Activated naive CD4-positive, alpha-beta T cell treated with anti-CD3 and anti-CD28 coated beads for 36 hours (primary cell): ENCODE measurements at regions of chr7 and their contacts with region 1.

Region 1: GRCh38 chr7:130084037-130084875 is 13.9 kb downstream of the KLHDC10 start:
- DNase-seq: no peak
- H3K4me3 Mint-ChIP-seq: no peak overlapping the region
- H3K27ac Mint-ChIP-seq: no peak overlapping the region
- H3K4me1 Mint-ChIP-seq: peaks cover 21% of the 10 kb centered on the region
- H3K27me3 Mint-ChIP-seq: no peaks in the 10 kb centered on the region

Region 2: GRCh38 chr7:130124711-130125110 is 40.5 kb after region 1 on chr7:
- CTCF ChIA-PET with region 1: interaction called, 11 read pairs
- intact Hi-C with region 1: no loop called
- DNase-seq: no peak
- H3K4me3 Mint-ChIP-seq: no peak overlapping the region
- H3K27ac Mint-ChIP-seq: no peak overlapping the region
- H3K4me1 Mint-ChIP-seq: no peaks in the 10 kb centered on the region
- H3K27me3 Mint-ChIP-seq: no peaks in the 10 kb centered on the region

Region 3: DNA sequence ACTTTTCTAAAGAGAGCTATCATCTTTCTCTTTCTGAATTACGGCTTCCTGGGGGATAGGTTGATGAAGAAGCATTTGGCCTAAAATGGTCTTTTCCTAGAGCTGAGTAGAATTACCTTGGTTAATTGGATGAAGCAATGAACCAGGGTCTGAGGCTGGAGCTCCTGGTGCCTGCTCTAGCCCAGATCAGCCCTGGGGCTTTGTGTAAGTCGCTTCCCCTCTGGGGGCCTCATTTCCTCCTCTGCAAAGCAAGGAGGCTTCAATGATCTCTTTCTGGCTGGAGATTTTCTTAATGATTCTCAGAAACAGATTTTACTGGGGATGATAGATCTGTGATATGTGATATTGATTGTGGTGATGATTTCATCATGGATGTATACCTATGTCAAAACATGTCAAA is 178.9 kb after region 1 on chr7:
- CTCF ChIA-PET with region 1: no interaction called
- intact Hi-C with region 1: no loop called
- DNase-seq: no peak
- H3K4me3 Mint-ChIP-seq: no peak overlapping the region
- H3K27ac Mint-ChIP-seq: no peak overlapping the region
- H3K4me1 Mint-ChIP-seq: no peaks in the 10 kb centered on the region
- H3K27me3 Mint-ChIP-seq: no peaks in the 10 kb centered on the region